CD8-positive, alpha-beta T cell (primary cell): ENCODE measurements at regions of chr2 and their contacts with region 1.

Region 1: GRCh38 chr2:39227628-39228412 is 15.9 kb downstream of the CDKL4 start:
- DNase-seq: peak; percentile 67 to 90 (median 83)
- ATAC-seq: peak; percentile 90
- H3K4me3 ChIP-seq: peak overlapping the region; percentile 31 to 35
- H3K4me3 Mint-ChIP-seq: peak overlapping the region; percentile 77
- H3K27ac ChIP-seq: no peak overlapping the region
- H3K27ac Mint-ChIP-seq: no peak overlapping the region
- H3K4me1 ChIP-seq: peaks cover 17% of the 10 kb centered on the region
- H3K4me1 Mint-ChIP-seq: peaks cover 19% of the 10 kb centered on the region
- H3K27me3 ChIP-seq: no peaks in the 10 kb centered on the region
- H3K27me3 Mint-ChIP-seq: no peaks in the 10 kb centered on the region
- CTCF ChIP-seq: peak; percentile 76

Region 2: GRCh38 chr2:39059366-39059952 is 168.4 kb before region 1 on chr2:
- CTCF ChIA-PET with region 1: interaction called, 268 read pairs
- POLR2A ChIA-PET with region 1: no interaction called
- intact Hi-C with region 1: loop called (anchors 1 kb)
- DNase-seq: peak in 2 of 9 experiments; percentile 63 to 74
- ATAC-seq: no peak
- H3K4me3 ChIP-seq: no peak overlapping the region
- H3K4me3 Mint-ChIP-seq: no peak overlapping the region
- H3K27ac ChIP-seq: no peak overlapping the region
- H3K27ac Mint-ChIP-seq: peak overlapping the region; percentile 16
- H3K4me1 ChIP-seq: no peaks in the 10 kb centered on the region
- H3K4me1 Mint-ChIP-seq: peaks cover 3% of the 10 kb centered on the region
- H3K27me3 ChIP-seq: no peaks in the 10 kb centered on the region
- H3K27me3 Mint-ChIP-seq: no peaks in the 10 kb centered on the region
- CTCF ChIP-seq: peak; percentile 97

Region 3: GRCh38 chr2:39080152-39080551 is 147.7 kb before region 1 on chr2:
- CTCF ChIA-PET with region 1: interaction called, 12 read pairs
- POLR2A ChIA-PET with region 1: no interaction called
- intact Hi-C with region 1: no loop called
- DNase-seq: no peak
- ATAC-seq: no peak
- H3K4me3 ChIP-seq: no peak overlapping the region
- H3K4me3 Mint-ChIP-seq: no peak overlapping the region
- H3K27ac ChIP-seq: no peak overlapping the region
- H3K27ac Mint-ChIP-seq: no peak overlapping the region
- H3K4me1 ChIP-seq: peaks cover 4% of the 10 kb centered on the region
- H3K4me1 Mint-ChIP-seq: peaks cover 44% of the 10 kb centered on the region
- H3K27me3 ChIP-seq: no peaks in the 10 kb centered on the region
- H3K27me3 Mint-ChIP-seq: no peaks in the 10 kb centered on the region
- CTCF ChIP-seq: no peak

Region 4: DNA sequence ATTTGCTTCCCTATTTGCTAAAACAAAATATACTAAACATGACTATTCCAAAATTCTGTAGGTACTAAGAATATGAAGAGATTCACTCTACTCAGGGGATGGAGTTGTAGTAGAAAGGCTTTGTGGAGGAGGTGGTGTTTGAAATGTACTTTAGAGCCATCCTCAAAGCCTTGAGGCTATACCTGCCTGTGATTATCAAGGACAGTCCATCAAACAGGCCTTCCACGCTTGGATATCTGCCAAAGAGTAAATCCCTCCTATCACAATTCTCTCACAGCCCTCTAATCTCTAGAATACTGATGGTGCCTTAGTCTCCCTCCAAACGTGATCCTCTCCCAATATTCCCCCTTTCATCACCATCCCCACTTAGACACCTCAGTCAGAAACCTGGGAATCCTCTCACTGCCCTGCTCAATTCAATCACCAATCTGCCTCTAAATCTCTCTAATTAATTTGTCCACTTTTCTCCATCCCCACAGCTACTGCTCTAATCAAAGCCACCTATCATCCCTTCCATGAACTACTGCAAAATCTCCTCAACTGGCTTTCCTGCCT is 120.0 kb before region 1 on chr2:
- CTCF ChIA-PET with region 1: interaction called, 28 read pairs
- POLR2A ChIA-PET with region 1: interaction called, 3 read pairs
- intact Hi-C with region 1: no loop called
- DNase-seq: no peak
- ATAC-seq: no peak
- H3K4me3 ChIP-seq: no peak overlapping the region
- H3K4me3 Mint-ChIP-seq: no peak overlapping the region
- H3K27ac ChIP-seq: no peak overlapping the region
- H3K27ac Mint-ChIP-seq: peak overlapping the region; percentile 33
- H3K4me1 ChIP-seq: peaks cover 21% of the 10 kb centered on the region
- H3K4me1 Mint-ChIP-seq: peaks cover 70% of the 10 kb centered on the region
- H3K27me3 ChIP-seq: no peaks in the 10 kb centered on the region
- H3K27me3 Mint-ChIP-seq: no peaks in the 10 kb centered on the region
- CTCF ChIP-seq: no peak

Region 5: DNA sequence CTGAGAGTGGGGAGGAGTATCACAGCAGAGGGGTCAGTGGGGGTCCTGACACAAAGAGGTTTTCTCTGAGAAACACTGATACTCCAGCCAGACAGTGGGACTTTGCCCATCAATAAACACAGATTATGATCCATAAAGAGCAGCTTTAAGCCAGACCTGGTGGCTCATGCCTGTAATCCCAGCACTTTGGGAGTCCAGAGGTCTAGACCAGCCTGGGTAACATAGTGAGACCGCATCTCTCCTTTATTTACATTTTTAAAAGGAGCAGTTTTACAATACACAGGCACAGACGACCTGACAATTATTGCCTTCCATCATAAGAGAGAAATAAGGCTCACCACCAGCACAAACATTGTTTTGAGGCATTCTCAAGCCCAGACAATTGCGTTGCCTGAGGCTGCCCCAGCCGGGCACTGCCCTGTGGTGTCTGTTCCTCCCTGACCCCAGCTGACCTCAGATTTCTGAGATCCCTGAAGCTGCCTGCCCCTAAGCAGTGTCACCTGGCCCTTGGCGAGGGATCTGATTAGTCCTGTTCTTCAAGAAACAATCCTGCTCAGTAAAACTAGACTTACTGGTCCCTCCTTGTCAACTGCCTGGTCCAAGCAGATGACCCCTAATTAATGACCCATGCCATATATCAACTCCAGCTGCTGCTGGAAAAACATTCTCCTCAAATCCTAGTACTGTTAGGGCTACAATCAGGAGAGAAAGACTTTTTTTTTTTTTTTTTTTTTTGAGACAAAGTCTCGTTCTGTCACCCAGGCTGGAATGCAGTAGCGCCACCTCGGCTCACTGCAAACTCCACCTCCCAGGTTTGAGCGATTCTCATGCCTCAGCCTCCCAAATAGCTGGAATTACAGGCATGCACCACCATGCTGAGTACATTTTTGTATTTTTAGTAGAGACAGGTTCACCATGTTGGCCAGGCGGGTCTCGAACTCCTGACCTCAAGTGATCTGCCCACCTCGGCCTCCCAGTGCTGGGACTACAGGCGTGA is 47.5 kb before region 1 on chr2:
- CTCF ChIA-PET with region 1: no interaction called
- POLR2A ChIA-PET with region 1: no interaction called
- intact Hi-C with region 1: loop called in 1 of 2 experiments (anchors 10 kb)
- DNase-seq: no peak
- ATAC-seq: no peak
- H3K4me3 ChIP-seq: no peak overlapping the region
- H3K4me3 Mint-ChIP-seq: no peak overlapping the region
- H3K27ac ChIP-seq: no peak overlapping the region
- H3K27ac Mint-ChIP-seq: no peak overlapping the region
- H3K4me1 ChIP-seq: no peaks in the 10 kb centered on the region
- H3K4me1 Mint-ChIP-seq: no peaks in the 10 kb centered on the region
- H3K27me3 ChIP-seq: no peaks in the 10 kb centered on the region
- H3K27me3 Mint-ChIP-seq: no peaks in the 10 kb centered on the region
- CTCF ChIP-seq: no peak

Region 6: GRCh38 chr2:39216346-39217191 is 11.3 kb before region 1 on chr2:
- CTCF ChIA-PET with region 1: interaction called, 47 read pairs
- POLR2A ChIA-PET with region 1: interaction called, 8 read pairs
- intact Hi-C with region 1: loop called in 1 of 2 experiments (anchors 1 kb)
- DNase-seq: peak; percentile 50 to 94 (median 74)
- ATAC-seq: peak; percentile 90
- H3K4me3 ChIP-seq: no peak overlapping the region
- H3K4me3 Mint-ChIP-seq: peak overlapping the region; percentile 44
- H3K27ac ChIP-seq: peak overlapping the region; percentile 41 to 64
- H3K27ac Mint-ChIP-seq: peak overlapping the region; percentile 37
- H3K4me1 ChIP-seq: peaks cover 43% of the 10 kb centered on the region
- H3K4me1 Mint-ChIP-seq: peaks cover 49% of the 10 kb centered on the region
- H3K27me3 ChIP-seq: no peaks in the 10 kb centered on the region
- H3K27me3 Mint-ChIP-seq: no peaks in the 10 kb centered on the region
- CTCF ChIP-seq: no peak

Region 7: GRCh38 chr2:39252888-39253518 is 25.2 kb after region 1 on chr2:
- CTCF ChIA-PET with region 1: interaction called, 14 read pairs
- POLR2A ChIA-PET with region 1: no interaction called
- intact Hi-C with region 1: no loop called
- DNase-seq: no peak
- ATAC-seq: no peak
- H3K4me3 ChIP-seq: no peak overlapping the region
- H3K4me3 Mint-ChIP-seq: no peak overlapping the region
- H3K27ac ChIP-seq: no peak overlapping the region
- H3K27ac Mint-ChIP-seq: no peak overlapping the region
- H3K4me1 ChIP-seq: no peaks in the 10 kb centered on the region
- H3K4me1 Mint-ChIP-seq: peaks cover 2% of the 10 kb centered on the region
- H3K27me3 ChIP-seq: no peaks in the 10 kb centered on the region
- H3K27me3 Mint-ChIP-seq: no peaks in the 10 kb centered on the region
- CTCF ChIP-seq: no peak

Region 8: GRCh38 chr2:39390216-39390615 is 162.4 kb after region 1 on chr2:
- CTCF ChIA-PET with region 1: no interaction called
- POLR2A ChIA-PET with region 1: no interaction called
- intact Hi-C with region 1: no loop called
- DNase-seq: no peak
- ATAC-seq: no peak
- H3K4me3 ChIP-seq: no peak overlapping the region
- H3K4me3 Mint-ChIP-seq: no peak overlapping the region
- H3K27ac ChIP-seq: no peak overlapping the region
- H3K27ac Mint-ChIP-seq: no peak overlapping the region
- H3K4me1 ChIP-seq: no peaks in the 10 kb centered on the region
- H3K4me1 Mint-ChIP-seq: peaks cover 17% of the 10 kb centered on the region
- H3K27me3 ChIP-seq: no peaks in the 10 kb centered on the region
- H3K27me3 Mint-ChIP-seq: no peaks in the 10 kb centered on the region
- CTCF ChIP-seq: no peak

Region 9: GRCh38 chr2:41084321-41084720 is 1856.5 kb after region 1 on chr2:
- CTCF ChIA-PET with region 1: no interaction called
- POLR2A ChIA-PET with region 1: no interaction called
- intact Hi-C with region 1: no loop called
- DNase-seq: no peak
- ATAC-seq: no peak
- H3K4me3 ChIP-seq: no peak overlapping the region
- H3K4me3 Mint-ChIP-seq: no peak overlapping the region
- H3K27ac ChIP-seq: no peak overlapping the region
- H3K27ac Mint-ChIP-seq: no peak overlapping the region
- H3K4me1 ChIP-seq: no peaks in the 10 kb centered on the region
- H3K4me1 Mint-ChIP-seq: no peaks in the 10 kb centered on the region
- H3K27me3 ChIP-seq: no peaks in the 10 kb centered on the region
- H3K27me3 Mint-ChIP-seq: no peaks in the 10 kb centered on the region
- CTCF ChIP-seq: no peak